Common myeloid progenitor, CD34-positive (primary cell): ENCODE measurements at regions of chr15 and their contacts with region 1.

Region 1: DNA sequence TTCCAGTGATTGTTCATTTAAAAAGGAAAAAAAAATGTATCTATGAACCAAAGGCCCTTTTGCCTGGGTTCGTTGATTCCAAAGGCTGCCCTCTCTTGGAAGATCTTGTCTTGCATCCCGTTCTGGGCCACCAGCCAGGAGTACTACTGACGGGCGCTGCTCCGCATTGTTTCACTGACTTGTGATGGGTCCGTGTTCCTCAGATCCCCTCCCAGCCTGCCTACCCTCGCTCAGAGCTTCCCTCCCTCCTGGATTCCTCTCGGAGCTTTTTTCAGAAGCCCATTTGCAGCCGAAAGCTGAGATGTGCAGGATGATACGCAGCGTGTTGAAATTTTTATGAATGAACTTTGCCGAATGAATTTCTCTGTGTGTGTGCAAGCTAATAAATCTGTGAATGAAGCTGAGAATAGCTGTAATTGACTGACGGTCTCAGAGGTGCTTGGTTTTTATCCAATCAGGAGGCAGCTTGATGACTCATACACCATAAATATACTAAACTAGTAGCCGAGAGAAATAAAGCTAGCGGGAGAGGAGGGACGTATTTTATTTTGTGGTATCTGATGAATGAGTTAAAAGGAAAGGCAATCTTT is at the start of gene SHC4:
- DNase-seq: peak; percentile 42 to 78 (median 70)
- H3K4me3 ChIP-seq: peak within 1 kb of the TSS; percentile 18 to 76 (median 60)
- H3K27ac ChIP-seq: no peak within 1 kb of the TSS
- H3K4me1 ChIP-seq: peaks cover 9 to 37% (median 21%) of the 10 kb centered on the region in 4 experiments
- H3K27me3 ChIP-seq: peaks cover 0 to 40% (median 18%) of the 10 kb centered on the region in 5 experiments

Region 2: DNA sequence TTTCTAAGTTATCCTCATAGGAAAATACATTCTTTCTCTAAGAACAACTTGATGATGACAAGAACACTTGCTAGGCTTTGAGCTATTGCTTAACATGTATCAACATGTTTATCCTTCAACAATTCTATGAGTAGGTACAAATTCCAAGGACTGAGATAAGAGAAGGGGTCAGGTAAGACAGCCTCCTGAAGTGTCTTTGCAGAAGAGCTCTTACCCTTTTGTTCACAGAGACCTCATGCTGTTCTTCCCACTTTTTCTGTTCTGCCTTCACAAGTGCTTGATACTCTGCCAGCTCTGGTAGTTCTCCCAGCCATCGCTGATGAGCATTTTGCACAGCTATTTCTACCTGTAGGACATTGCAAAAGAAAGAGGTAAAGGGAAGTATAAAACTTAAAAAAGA is 203.7 kb before region 1 on chr15:
- CTCF ChIA-PET with region 1: no interaction called
- POLR2A ChIA-PET with region 1: no interaction called
- DNase-seq: no peak
- H3K4me3 ChIP-seq: no peak overlapping the region
- H3K27ac ChIP-seq: no peak overlapping the region
- H3K4me1 ChIP-seq: no peaks in the 10 kb centered on the region
- H3K27me3 ChIP-seq: no peaks in the 10 kb centered on the region

Region 3: GRCh38 chr15:48861813-48862431 is 101.7 kb before region 1 on chr15:
- CTCF ChIA-PET with region 1: interaction called, 11 read pairs
- POLR2A ChIA-PET with region 1: no interaction called
- DNase-seq: peak; percentile 81 to 89 (median 88)
- H3K4me3 ChIP-seq: no peak overlapping the region
- H3K27ac ChIP-seq: no peak overlapping the region
- H3K4me1 ChIP-seq: peaks cover 2 to 21% (median 12%) of the 10 kb centered on the region in 4 experiments
- H3K27me3 ChIP-seq: no peaks in the 10 kb centered on the region

Region 4: GRCh38 chr15:48975472-48976419 is 12.1 kb after region 1 on chr15:
- CTCF ChIA-PET with region 1: interaction called, 41 read pairs
- POLR2A ChIA-PET with region 1: no interaction called
- DNase-seq: peak; percentile 77 to 84 (median 82)
- H3K4me3 ChIP-seq: peak overlapping the region; percentile 40 to 81 (median 66)
- H3K27ac ChIP-seq: peak overlapping the region in 1 of 2 experiments; percentile 38
- H3K4me1 ChIP-seq: peaks cover 4 to 11% (median 8%) of the 10 kb centered on the region in 4 experiments
- H3K27me3 ChIP-seq: peaks cover 0 to 3% (median 0%) of the 10 kb centered on the region in 5 experiments